Activated B cell treated with CpG ODN at 0.5 μM for 24 hours (primary cell): ENCODE measurements at regions of chr11 and their contacts with region 1.

Region 1: DNA sequence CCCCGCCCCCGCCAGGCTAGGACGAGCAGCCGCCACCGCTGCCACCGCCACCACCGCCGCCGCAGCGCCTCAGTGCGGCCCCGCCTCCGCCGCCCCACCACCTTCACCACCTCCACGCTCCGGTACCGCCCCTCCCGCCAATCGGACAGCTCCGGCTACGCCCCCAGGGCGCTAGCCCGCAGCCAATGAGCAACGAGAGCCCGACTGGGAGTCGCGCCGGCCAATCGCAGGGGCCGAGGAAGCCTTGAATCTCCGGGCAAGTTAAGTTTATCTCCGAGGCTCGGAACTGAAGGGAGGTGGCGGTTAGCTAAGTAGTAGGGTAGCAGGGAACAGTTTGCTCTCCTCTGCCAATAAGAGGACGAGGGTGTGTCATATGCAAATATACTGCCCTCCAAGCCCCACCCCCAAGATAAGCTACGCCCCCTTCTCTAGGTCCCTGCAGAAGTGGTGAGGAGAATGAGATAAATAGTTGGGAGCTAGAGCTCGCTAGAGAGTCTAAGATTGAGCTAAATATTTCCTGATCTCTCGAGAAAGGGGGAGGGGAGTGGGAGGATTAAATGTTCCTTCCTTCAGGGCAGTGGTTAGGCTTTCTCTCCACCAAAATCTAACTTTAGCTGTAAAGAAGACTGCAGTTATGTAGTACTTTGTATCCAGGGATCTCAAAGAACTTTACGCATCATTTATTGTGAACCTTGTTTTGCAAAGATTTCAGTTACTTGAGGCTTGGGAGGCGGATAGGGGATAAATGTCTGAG is at the start of gene SESN3:
- DNase-seq: peak; percentile 96
- ATAC-seq: peak; percentile 85
- H3K4me3 Mint-ChIP-seq: no peak within 1 kb of the TSS
- H3K27ac Mint-ChIP-seq: peak within 1 kb of the TSS; percentile 92
- H3K4me1 Mint-ChIP-seq: peaks cover 58% of the 10 kb centered on the region
- H3K27me3 Mint-ChIP-seq: no peaks in the 10 kb centered on the region
- CTCF ChIP-seq: no peak
- total RNA-seq, gene SESN3: 82.3 and 87.2 TPM in 2 replicates

Region 2: DNA sequence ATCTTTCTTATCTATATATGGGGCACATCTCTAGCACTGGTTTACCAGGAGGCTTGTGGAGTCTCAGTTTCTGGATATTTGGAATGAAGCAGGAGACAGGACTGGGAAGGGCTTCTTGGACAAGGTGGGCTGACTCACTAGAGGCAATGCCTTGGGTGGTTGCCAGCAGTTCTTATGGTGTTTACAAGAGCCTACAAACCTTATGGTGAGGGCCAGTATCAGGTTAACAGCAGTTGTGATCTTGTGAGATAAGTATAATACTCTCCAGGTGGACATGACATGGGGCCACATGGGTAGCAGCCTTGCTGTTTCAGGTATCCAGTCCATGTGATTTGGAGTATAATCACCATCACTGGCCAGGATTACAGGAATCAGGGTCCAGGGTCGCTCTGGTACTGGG is 677.4 kb before region 1 on chr11:
- CTCF ChIA-PET with region 1: no interaction called
- POLR2A ChIA-PET with region 1: no interaction called
- intact Hi-C with region 1: no loop called
- DNase-seq: no peak
- ATAC-seq: no peak
- H3K4me3 Mint-ChIP-seq: no peak overlapping the region
- H3K27ac Mint-ChIP-seq: no peak overlapping the region
- H3K4me1 Mint-ChIP-seq: peaks cover 3% of the 10 kb centered on the region
- H3K27me3 Mint-ChIP-seq: no peaks in the 10 kb centered on the region
- CTCF ChIP-seq: no peak

Region 3: GRCh38 chr11:95055283-95055897 is 175.9 kb before region 1 on chr11:
- CTCF ChIA-PET with region 1: no interaction called
- POLR2A ChIA-PET with region 1: no interaction called
- intact Hi-C with region 1: no loop called
- DNase-seq: no peak
- ATAC-seq: peak; percentile 81
- H3K4me3 Mint-ChIP-seq: no peak overlapping the region
- H3K27ac Mint-ChIP-seq: no peak overlapping the region
- H3K4me1 Mint-ChIP-seq: peaks cover 11% of the 10 kb centered on the region
- H3K27me3 Mint-ChIP-seq: peaks cover 7% of the 10 kb centered on the region
- CTCF ChIP-seq: no peak

Region 4: GRCh38 chr11:95195831-95196230 is 35.5 kb before region 1 on chr11:
- CTCF ChIA-PET with region 1: no interaction called
- POLR2A ChIA-PET with region 1: interaction called, 9 read pairs
- intact Hi-C with region 1: loop called (anchors 2 kb)
- DNase-seq: no peak
- ATAC-seq: no peak
- H3K4me3 Mint-ChIP-seq: no peak overlapping the region
- H3K27ac Mint-ChIP-seq: peak overlapping the region; percentile 24
- H3K4me1 Mint-ChIP-seq: peaks cover 47% of the 10 kb centered on the region
- H3K27me3 Mint-ChIP-seq: no peaks in the 10 kb centered on the region
- CTCF ChIP-seq: no peak

Region 5: DNA sequence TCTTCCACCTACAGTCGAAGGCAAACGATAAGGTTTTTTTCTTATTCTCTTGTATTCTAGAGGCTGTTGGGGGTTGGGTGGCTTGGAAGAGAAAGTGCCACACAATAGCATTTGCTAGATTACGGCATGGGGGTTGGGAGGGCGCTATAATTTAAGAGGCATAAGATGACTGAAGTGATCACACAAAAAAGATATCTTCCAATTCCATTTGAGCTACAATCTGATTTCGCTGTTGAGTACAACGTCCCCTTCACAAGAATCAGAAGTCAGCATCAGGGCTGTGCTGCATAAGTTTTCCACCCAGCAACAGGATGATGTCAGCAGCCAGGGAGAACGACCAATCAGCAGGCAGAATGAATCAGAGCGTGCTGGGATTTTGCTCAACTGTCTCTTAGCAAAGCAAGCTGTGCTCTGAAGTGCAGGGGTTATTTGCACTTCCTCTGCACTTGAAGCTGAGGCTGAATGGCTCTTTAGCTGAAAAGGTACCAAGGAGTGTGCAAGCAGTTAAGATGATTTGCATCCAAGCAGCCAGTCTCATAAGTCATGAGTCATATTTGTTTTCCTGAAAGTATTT is 22.9 kb after region 1 on chr11:
- CTCF ChIA-PET with region 1: interaction called, 22 read pairs
- POLR2A ChIA-PET with region 1: interaction called, 357 read pairs
- intact Hi-C with region 1: loop called (anchors 1 kb)
- DNase-seq: peak; percentile 54
- ATAC-seq: peak; percentile 94
- H3K4me3 Mint-ChIP-seq: peak overlapping the region; percentile 75
- H3K27ac Mint-ChIP-seq: peak overlapping the region; percentile 91
- H3K4me1 Mint-ChIP-seq: peaks cover 81% of the 10 kb centered on the region
- H3K27me3 Mint-ChIP-seq: no peaks in the 10 kb centered on the region
- CTCF ChIP-seq: no peak

Region 6: GRCh38 chr11:95337175-95337957 is 106.1 kb after region 1 on chr11:
- CTCF ChIA-PET with region 1: interaction called, 8 read pairs
- POLR2A ChIA-PET with region 1: interaction called, 64 read pairs
- intact Hi-C with region 1: loop called (anchors 1 kb)
- DNase-seq: peak; percentile 48
- ATAC-seq: peak; percentile 63
- H3K4me3 Mint-ChIP-seq: no peak overlapping the region
- H3K27ac Mint-ChIP-seq: no peak overlapping the region
- H3K4me1 Mint-ChIP-seq: peaks cover 1% of the 10 kb centered on the region
- H3K27me3 Mint-ChIP-seq: no peaks in the 10 kb centered on the region
- CTCF ChIP-seq: no peak

Region 7: GRCh38 chr11:95512682-95513081 is 281.4 kb after region 1 on chr11:
- CTCF ChIA-PET with region 1: no interaction called
- POLR2A ChIA-PET with region 1: no interaction called
- intact Hi-C with region 1: no loop called
- DNase-seq: no peak
- ATAC-seq: no peak
- H3K4me3 Mint-ChIP-seq: no peak overlapping the region
- H3K27ac Mint-ChIP-seq: no peak overlapping the region
- H3K4me1 Mint-ChIP-seq: no peaks in the 10 kb centered on the region
- H3K27me3 Mint-ChIP-seq: no peaks in the 10 kb centered on the region
- CTCF ChIP-seq: no peak

Region 8: DNA sequence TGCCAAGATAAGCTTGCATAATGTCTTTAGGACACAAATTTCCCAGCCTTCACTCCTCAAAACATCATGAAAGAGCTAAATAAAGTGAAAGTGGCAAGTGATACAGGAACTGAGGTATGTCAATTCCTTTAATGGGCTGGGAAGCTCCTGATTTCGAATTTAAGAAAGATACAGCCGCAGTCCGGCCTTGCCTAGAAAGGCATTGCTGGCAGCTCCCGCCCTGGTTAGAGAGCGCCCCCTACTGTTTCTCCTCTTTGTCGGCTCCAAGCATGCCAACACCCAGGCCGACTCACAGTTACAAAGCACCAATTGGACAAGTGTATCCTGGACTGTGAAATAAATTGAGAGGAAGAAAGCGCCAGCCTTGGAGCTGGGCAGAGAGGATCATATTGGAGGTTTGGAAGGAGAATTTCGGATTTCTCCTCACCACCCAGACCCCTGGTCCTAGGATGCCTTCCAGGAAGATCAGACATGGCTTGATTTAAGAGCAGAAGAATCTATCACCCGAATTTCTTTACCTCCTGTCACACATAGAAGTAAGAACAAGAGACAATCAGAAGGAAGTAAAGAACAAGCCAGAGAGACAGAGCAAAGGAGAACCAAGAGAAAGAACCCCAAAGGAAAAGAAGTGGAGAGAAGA is 474.3 kb after region 1 on chr11:
- CTCF ChIA-PET with region 1: interaction called, 57 read pairs
- POLR2A ChIA-PET with region 1: interaction called, 90 read pairs
- intact Hi-C with region 1: loop called (anchors 1 kb)
- DNase-seq: peak; percentile 61
- ATAC-seq: peak; percentile 93
- H3K4me3 Mint-ChIP-seq: no peak overlapping the region
- H3K27ac Mint-ChIP-seq: no peak overlapping the region
- H3K4me1 Mint-ChIP-seq: peaks cover 26% of the 10 kb centered on the region
- H3K27me3 Mint-ChIP-seq: no peaks in the 10 kb centered on the region
- CTCF ChIP-seq: peak; percentile 93

Region 9: DNA sequence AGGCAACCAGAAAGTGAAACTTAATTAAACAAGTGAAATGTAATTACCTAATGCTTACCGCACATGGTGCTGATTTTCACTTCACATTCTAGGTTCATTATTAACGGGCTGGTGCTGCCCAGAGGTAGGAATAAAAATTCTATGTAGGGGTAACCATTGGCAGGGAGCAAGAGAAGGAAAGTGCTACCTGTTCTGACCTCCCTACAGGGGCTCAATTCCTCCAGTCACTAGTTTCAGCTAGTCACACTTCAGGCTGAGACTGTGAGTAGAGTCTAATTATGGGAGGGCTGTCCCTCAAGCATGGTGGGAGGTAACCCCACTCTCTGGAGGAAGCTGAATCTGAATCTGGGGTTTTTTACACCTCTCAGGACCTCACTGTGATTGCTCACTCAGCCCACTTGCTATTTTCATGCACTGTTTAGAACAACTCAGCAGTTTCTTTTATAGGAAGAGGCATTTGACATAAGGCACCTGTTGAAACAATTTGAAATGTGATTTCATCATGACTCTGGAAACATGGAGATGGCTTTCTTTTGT is 1036.3 kb after region 1 on chr11:
- CTCF ChIA-PET with region 1: no interaction called
- POLR2A ChIA-PET with region 1: no interaction called
- intact Hi-C with region 1: loop called (anchors 10 kb)
- DNase-seq: no peak
- ATAC-seq: peak; percentile 98
- H3K4me3 Mint-ChIP-seq: peak overlapping the region; percentile 73
- H3K27ac Mint-ChIP-seq: peak overlapping the region; percentile 89
- H3K4me1 Mint-ChIP-seq: peaks cover 70% of the 10 kb centered on the region
- H3K27me3 Mint-ChIP-seq: no peaks in the 10 kb centered on the region
- CTCF ChIP-seq: no peak